ENCODE measurements at regions of chr2 and their contacts with region 1.

Region 1: DNA sequence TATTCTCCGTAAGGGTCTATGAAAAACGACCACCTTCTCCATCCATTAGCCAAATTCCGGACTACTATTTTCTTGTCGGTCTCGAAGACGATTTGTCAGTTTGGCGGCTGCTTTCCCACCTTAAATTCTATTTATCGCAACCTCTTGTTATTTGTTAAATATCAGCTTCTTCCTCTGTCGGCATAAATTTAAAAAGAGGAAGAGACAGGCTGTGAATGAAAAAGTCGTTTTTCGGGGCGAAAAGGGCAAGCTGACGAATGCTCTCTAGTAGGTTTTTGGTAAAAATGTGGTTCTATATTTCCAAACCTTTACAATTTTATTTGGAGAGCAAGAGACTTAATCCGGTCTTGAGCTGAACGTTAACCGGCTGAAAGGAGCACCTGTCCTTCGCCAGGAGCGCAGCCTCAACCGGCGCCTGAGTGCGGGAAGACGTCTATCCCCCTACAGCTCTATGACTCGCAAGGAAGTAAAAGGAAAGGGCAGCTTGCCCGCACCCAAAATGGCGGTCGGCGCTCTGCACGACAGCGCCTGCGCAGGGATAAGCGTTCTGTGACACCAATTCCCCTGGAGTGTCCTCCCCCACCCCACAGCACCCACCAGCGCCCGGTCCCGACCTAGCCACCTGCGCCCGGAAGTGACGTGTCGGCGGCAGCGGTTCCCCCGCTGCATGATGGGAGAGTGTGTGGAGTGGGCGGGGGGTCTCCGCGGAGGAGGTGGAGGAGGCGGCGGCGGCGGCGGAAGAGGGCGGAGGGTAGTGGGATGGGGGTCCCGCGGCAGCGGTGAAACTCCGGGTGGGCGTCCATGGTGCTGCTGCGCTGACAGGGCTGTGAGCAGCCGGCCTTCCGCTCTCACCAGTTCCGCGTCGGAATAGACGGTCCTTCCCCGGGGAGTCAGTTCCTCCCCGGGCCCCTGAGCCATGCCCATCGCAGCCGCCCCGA is at the start of gene AFTPH:
- DNase-seq: peak; percentile 99
- H3K4me3 Mint-ChIP-seq: peak within 1 kb of the TSS; percentile 99
- H3K27ac Mint-ChIP-seq: peak within 1 kb of the TSS; percentile 100
- H3K4me1 Mint-ChIP-seq: peaks cover 26% of the 10 kb centered on the region
- H3K27me3 Mint-ChIP-seq: no peaks in the 10 kb centered on the region
- total RNA-seq, gene AFTPH: 25.3 to 27.3 TPM

Region 2: GRCh38 chr2:63841254-63842022 is 682.5 kb before region 1 on chr2 and contains the start of gene UGP2:
- CTCF ChIA-PET with region 1: no interaction called
- intact Hi-C with region 1: loop called (anchors 1 kb)
- DNase-seq: peak; percentile 88
- H3K4me3 Mint-ChIP-seq: peak within 1 kb of the TSS; percentile 99
- H3K27ac Mint-ChIP-seq: peak within 1 kb of the TSS; percentile 99
- H3K4me1 Mint-ChIP-seq: peaks cover 37% of the 10 kb centered on the region
- H3K27me3 Mint-ChIP-seq: no peaks in the 10 kb centered on the region
- total RNA-seq, gene UGP2: 82.2 to 93.1 TPM

Region 3: GRCh38 chr2:64259312-64259711 is 264.6 kb before region 1 on chr2:
- CTCF ChIA-PET with region 1: no interaction called
- intact Hi-C with region 1: no loop called
- DNase-seq: no peak
- H3K4me3 Mint-ChIP-seq: no peak overlapping the region
- H3K27ac Mint-ChIP-seq: no peak overlapping the region
- H3K4me1 Mint-ChIP-seq: peaks cover 12% of the 10 kb centered on the region
- H3K27me3 Mint-ChIP-seq: no peaks in the 10 kb centered on the region

Region 4: GRCh38 chr2:64434039-64434657 is 89.8 kb before region 1 on chr2:
- CTCF ChIA-PET with region 1: no interaction called
- intact Hi-C with region 1: no loop called
- DNase-seq: no peak
- H3K4me3 Mint-ChIP-seq: no peak overlapping the region
- H3K27ac Mint-ChIP-seq: no peak overlapping the region
- H3K4me1 Mint-ChIP-seq: no peaks in the 10 kb centered on the region
- H3K27me3 Mint-ChIP-seq: peaks cover 21% of the 10 kb centered on the region

Region 5: DNA sequence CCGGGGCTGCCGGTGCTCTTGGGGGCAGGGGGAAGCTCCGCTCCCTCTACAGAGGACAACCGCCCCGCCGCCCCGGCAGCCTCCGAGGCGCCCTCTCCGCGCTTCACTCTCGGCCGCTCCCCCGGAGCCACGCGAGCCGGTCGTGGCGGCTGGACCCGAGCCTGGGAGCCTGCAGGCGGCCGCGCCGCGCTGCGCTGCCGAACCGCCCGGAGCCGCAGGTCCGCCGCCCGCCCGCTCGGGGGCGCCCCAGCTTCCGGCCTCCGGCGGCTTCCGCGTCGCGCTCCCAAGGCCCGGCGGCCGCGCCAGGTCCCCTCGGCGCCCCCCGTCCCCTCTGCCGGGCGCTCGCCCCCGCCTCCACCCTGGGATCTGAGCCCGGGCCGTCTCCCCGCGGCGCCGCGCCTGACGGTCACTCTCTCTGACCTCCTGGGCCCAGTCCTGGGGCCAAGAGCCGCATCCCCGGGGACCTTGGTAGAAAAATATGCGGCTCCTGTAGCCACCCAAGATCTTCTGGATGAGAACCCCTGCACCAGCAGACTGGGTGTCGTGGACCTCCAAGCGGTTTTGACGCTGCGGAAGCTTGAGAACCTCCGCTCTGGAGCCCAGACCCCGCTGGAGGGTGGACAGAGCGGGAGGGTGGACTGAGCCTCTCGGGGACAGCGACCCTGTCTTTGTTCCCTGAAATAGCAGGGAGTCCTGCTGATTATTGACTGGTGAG is 85.4 kb after region 1 on chr2:
- CTCF ChIA-PET with region 1: interaction called, 19 read pairs
- intact Hi-C with region 1: loop called (anchors 1 kb)
- DNase-seq: peak; percentile 62
- H3K4me3 Mint-ChIP-seq: peak overlapping the region; percentile 65
- H3K27ac Mint-ChIP-seq: no peak overlapping the region
- H3K4me1 Mint-ChIP-seq: peaks cover 24% of the 10 kb centered on the region
- H3K27me3 Mint-ChIP-seq: no peaks in the 10 kb centered on the region

Region 6: GRCh38 chr2:64750817-64751285 is 226.9 kb after region 1 on chr2:
- CTCF ChIA-PET with region 1: no interaction called
- intact Hi-C with region 1: loop called (anchors 1 kb)
- DNase-seq: peak; percentile 99
- H3K4me3 Mint-ChIP-seq: peak overlapping the region; percentile 99
- H3K27ac Mint-ChIP-seq: peak overlapping the region; percentile 89
- H3K4me1 Mint-ChIP-seq: peaks cover 30% of the 10 kb centered on the region
- H3K27me3 Mint-ChIP-seq: no peaks in the 10 kb centered on the region

Region 7: DNA sequence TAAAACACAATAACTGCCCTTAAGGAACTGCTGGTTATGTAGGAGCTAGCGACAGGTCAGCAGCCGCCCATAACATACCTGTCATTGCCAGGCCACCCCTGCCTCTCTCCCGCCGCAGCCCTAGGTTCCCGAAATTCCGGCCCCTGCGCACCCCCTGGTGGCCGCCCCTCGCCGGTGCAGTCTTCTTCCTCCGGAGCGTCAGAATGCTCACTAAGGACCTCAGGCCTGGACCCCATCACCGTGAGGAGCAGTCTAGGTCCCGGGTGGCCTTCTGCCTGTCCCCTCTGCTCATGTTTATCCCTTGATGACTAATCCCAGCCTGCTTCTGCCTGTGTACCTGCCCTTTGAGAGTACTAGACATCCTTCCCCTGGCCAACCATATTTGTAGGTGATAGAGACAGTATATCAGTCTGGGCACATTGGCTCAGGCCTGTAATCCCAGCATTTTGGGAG is 349.6 kb after region 1 on chr2:
- CTCF ChIA-PET with region 1: interaction called, 7 read pairs
- intact Hi-C with region 1: loop called (anchors 1 kb)
- DNase-seq: peak; percentile 86
- H3K4me3 Mint-ChIP-seq: peak overlapping the region; percentile 19
- H3K27ac Mint-ChIP-seq: no peak overlapping the region
- H3K4me1 Mint-ChIP-seq: peaks cover 2% of the 10 kb centered on the region
- H3K27me3 Mint-ChIP-seq: no peaks in the 10 kb centered on the region

Region 8: GRCh38 chr2:65129826-65130663 is 606.1 kb after region 1 on chr2 and contains the start of gene RAB1A:
- CTCF ChIA-PET with region 1: no interaction called
- intact Hi-C with region 1: loop called (anchors 1 kb)
- DNase-seq: peak; percentile 100
- H3K4me3 Mint-ChIP-seq: peak within 1 kb of the TSS; percentile 95
- H3K27ac Mint-ChIP-seq: peak within 1 kb of the TSS; percentile 94
- H3K4me1 Mint-ChIP-seq: peaks cover 35% of the 10 kb centered on the region
- H3K27me3 Mint-ChIP-seq: no peaks in the 10 kb centered on the region
- total RNA-seq, gene RAB1A: 60.8 to 61.3 TPM

Measured in activated naive CD4-positive, alpha-beta T cell treated with anti-CD3 and anti-CD28 coated beads for 36 hours (primary cell).